ENCODE measurements at regions of chr14 and their contacts with region 1.

Region 1: GRCh38 chr14:74945823-74946682 is 9.3 kb downstream of the PGF start:
- DNase-seq: peak; percentile 75 to 88 (median 80)
- ATAC-seq: peak; percentile 74 to 83 (median 80)
- H3K4me3 ChIP-seq: peak overlapping the region in 1 of 12 donors; percentile 18
- H3K27ac ChIP-seq: peak overlapping the region in 7 of 12 donors; percentile 31 to 48 (median 37)
- H3K4me1 ChIP-seq: peaks cover 0 to 55% (median 34%) of the 10 kb centered on the region in 12 donors
- H3K27me3 ChIP-seq: no peaks in the 10 kb centered on the region
- CTCF ChIP-seq: peak; percentile 87 to 96 (median 94)
- POLR2A ChIP-seq: no peak

Region 2: DNA sequence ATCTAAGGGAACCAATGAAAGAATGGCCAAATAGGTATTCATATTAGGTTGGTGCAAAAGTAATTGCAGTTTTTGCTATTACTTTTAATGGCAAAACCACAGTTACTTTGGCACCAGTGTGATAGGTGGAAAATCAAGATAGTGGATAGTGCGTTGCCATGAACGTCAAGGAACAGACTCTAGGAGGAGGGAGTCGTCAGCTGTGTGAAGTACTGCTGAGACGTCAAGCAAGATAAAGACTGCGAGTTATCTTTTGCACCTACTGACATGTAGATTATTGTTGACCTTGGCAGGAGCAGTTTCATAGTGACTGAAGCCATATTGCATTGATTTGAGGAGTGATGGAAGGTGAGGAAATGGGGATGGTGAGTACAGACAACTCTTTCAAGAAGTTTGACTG is 174.7 kb before region 1 on chr14:
- intact Hi-C with region 1: no loop called
- DNase-seq: no peak
- ATAC-seq: peak in 2 of 4 donors; percentile 60 to 71
- H3K4me3 ChIP-seq: no peak overlapping the region
- H3K27ac ChIP-seq: no peak overlapping the region
- H3K4me1 ChIP-seq: peaks cover 0 to 30% (median 17%) of the 10 kb centered on the region in 12 donors
- H3K27me3 ChIP-seq: no peaks in the 10 kb centered on the region
- CTCF ChIP-seq: no peak
- POLR2A ChIP-seq: no peak

Region 3: DNA sequence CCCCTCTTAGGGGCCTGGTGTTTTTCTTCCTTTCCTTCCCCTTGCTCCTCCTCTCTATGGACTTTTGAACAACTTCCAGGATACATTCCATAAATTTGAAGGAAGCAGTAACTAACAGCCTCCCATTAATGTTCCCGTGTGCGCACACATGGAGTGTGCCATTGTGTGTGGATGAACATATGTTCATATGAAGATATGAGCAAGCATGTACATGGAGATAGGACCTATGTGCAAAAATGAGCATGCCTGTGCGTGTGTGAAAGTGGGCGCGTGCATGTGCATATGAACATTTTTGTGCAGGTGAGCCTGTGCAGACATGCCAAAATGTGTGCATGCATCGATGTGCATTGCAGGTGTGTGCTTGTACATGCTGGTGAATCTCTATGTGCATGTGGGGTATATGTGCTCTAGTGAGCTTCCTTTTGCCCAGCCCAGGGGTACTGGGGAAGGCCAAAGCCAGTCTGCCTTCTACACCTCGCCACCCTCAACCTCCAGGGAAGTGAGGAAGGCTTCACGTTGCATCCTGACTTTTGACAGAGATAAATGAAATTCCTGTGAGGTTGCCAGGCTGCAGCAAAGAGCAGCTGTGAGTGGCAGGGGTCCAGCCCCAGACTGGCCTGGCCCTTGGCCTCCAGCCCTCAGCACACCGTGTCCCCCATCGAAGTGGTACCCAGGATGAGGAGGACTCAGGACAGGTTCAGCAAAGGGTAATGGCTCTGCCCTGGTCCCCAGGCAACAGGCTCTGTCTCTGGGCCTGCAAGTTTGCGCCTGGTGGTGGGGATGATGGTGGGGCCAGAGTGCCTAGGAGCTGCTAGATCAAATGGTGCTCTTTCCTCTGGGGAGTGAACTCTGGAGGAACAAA is 30.4 kb after region 1 on chr14:
- intact Hi-C with region 1: loop called in 1 of 10 experiments (anchors 1 kb)
- DNase-seq: no peak
- ATAC-seq: no peak
- H3K4me3 ChIP-seq: no peak overlapping the region
- H3K27ac ChIP-seq: no peak overlapping the region
- H3K4me1 ChIP-seq: peaks cover 7 to 72% (median 43%) of the 10 kb centered on the region in 12 donors
- H3K27me3 ChIP-seq: no peaks in the 10 kb centered on the region
- CTCF ChIP-seq: no peak
- POLR2A ChIP-seq: no peak

Region 4: DNA sequence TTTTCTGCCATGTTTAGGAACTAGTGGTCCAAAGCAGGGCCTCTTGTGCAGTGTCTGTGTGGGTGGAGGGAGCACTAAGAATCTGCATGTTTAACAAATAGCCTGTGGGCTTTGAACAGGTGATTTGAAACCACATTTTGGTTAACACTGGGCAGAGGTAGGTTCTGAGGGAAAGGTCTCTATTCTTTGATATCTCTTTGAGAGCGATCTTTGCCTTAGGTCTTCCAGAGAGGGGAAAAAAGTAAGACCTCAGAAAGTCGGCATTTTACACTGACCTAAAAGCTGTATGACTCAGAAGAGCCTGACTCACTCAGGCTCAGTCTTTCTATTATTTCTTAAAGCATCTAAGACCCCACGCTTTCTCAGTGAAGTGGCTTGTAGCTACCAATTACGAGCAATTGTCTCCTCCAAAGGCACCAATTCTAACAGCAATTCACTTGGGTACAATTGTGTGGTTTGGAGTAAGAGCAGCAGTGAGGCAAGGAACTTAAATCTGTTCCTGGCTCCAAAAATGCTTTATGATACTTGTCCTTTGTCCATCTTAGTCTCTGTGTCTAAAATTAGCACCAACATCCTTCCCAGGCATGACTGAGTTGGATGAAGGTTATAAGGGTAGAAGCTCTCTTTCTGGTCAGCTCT is 65.4 kb after region 1 on chr14:
- intact Hi-C with region 1: loop called in 4 of 10 experiments (anchors 5 to 10 kb)
- DNase-seq: no peak
- ATAC-seq: peak in 3 of 4 donors; percentile 65 to 72 (median 67)
- H3K4me3 ChIP-seq: no peak overlapping the region
- H3K27ac ChIP-seq: peak overlapping the region in 11 of 12 donors; percentile 20 to 78 (median 66)
- H3K4me1 ChIP-seq: peaks cover 7 to 37% (median 27%) of the 10 kb centered on the region in 12 donors
- H3K27me3 ChIP-seq: no peaks in the 10 kb centered on the region
- CTCF ChIP-seq: no peak
- POLR2A ChIP-seq: no peak

Region 5: DNA sequence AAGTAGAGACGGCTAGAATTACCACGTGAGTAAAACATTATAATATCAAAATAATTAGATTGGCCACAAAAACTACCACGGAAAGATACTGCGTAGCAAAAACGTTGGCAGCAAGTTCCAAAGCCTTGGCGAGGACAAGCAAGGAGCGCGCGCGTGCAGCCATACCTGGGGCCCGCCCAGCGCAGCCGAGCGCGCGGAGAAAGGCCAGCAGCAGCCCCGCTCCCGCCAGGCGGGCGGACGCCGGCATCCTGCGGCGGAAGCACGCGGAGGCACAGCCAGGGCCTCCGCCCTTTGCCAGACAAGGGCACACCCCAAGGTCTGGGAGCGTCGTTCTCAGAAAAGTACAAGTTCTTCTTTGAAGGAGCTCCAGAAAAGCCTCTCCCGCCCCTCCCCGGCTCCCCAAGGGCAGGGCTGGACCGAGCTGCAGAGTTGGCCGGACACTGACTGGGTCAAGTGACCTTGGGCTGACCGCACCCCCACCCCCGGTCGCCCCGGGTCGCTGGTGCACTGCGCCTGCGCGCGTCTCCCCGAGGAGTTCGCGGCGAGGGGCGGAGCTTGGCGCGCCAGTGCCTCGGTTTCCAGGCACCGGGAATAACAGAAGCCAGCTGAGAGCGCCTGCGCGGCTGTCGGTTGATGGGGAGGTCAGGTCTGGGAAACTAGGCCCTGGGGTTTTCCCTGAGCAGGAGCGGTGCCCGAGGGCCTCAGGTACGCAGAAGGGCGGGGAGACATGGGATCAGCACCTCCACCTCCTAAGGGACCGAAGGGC is 123.2 kb after region 1 on chr14 and contains the start of gene ZC2HC1C:
- intact Hi-C with region 1: loop called in 3 of 10 experiments (anchors 1 to 10 kb)
- DNase-seq: peak; percentile 96 to 99 (median 98)
- ATAC-seq: peak; percentile 91 to 97 (median 94)
- H3K4me3 ChIP-seq: peak within 1 kb of the TSS; percentile 27 to 69 (median 60)
- H3K27ac ChIP-seq: peak within 1 kb of the TSS; percentile 69 to 98 (median 94)
- H3K4me1 ChIP-seq: peaks cover 0 to 66% (median 30%) of the 10 kb centered on the region in 12 donors
- H3K27me3 ChIP-seq: no peaks in the 10 kb centered on the region
- CTCF ChIP-seq: no peak
- POLR2A ChIP-seq: peak in 1 of 2 donors; percentile 62
- total RNA-seq, gene ZC2HC1C: 3.4 to 9.5 (median 8.4) TPM

Measured in heart left ventricle (tissue), 16 donors.